Common myeloid progenitor, CD34-positive (primary cell): ENCODE measurements at regions of chr11 and their contacts with region 1.

Region 1: GRCh38 chr11:72091005-72091691 is 10.5 kb downstream of the LRRC51 start:
- DNase-seq: peak; percentile 86 to 93 (median 91)
- H3K4me3 ChIP-seq: peak overlapping the region in 1 of 7 experiments; percentile 14
- H3K27ac ChIP-seq: peak overlapping the region in 1 of 2 experiments; percentile 30
- H3K4me1 ChIP-seq: peaks cover 0 to 18% (median 13%) of the 10 kb centered on the region in 4 experiments
- H3K27me3 ChIP-seq: no peaks in the 10 kb centered on the region

Region 2: DNA sequence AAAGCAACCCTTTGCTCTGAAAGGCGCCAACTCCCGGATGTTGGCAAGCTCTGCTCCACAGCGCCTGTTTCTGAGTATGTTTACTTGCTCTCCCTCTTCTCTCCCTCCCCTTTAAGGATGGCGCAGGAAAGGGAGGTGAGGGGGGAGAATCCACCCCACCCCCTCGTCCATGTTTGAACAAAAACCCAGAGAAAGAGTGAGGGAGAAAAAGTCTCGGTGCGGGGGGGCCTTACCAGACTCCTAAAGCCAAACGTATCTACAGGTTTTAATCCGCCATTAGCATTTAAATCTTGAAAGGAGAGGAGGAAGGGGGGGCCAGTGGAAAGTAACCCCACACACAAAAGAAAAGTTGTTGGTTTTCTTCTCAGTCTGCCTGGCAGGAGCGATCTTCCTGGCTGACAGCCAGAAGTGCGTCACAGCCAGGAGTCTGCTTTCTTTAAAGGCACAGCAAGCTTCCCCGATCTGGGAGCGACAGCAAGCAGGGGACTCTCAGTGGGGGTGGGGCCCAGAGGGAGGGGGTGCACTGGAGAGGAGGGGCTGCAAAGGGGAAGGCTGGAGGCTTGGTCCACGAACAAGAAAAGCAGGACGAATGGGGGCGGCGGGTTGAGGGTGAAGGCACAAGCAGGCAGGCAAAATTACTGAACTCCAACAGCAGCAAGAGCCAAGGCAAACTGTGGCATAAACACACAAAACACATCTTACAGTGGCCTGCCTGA is 50.3 kb before region 1 on chr11:
- CTCF ChIA-PET with region 1: interaction called, 394 read pairs
- POLR2A ChIA-PET with region 1: no interaction called
- DNase-seq: peak; percentile 90 to 94 (median 94)
- H3K4me3 ChIP-seq: peak overlapping the region; percentile 67 to 93 (median 82)
- H3K27ac ChIP-seq: peak overlapping the region; percentile 91 to 95
- H3K4me1 ChIP-seq: peaks cover 19 to 65% (median 50%) of the 10 kb centered on the region in 4 experiments
- H3K27me3 ChIP-seq: no peaks in the 10 kb centered on the region

Region 3: DNA sequence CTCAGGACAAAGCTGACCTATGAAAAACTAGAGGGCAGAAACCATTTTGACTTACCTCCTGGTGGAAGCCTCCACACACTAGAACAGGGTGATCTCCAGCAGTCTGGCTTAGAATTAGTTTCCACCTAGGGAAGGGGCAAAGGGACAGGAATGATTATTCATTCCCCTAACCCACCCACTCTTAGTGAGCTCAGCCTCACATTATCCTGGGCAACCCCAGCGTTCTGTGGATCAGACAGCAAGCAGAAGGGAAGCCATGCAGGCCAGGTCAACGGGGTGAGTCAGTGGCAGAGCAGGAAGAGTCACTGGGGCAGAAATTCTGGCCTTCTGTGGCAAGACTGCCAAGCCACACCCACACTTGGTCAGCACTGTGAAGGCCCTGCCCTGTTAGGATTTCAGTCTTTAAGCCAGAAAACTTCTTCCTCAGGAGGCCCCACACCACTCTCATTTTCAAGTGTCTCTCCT is 21.3 kb before region 1 on chr11:
- CTCF ChIA-PET with region 1: interaction called, 28 read pairs
- POLR2A ChIA-PET with region 1: interaction called, 4 read pairs
- DNase-seq: peak in 2 of 3 donors; percentile 23 to 24
- H3K4me3 ChIP-seq: peak overlapping the region in 1 of 7 experiments; percentile 32
- H3K27ac ChIP-seq: peak overlapping the region in 1 of 2 experiments; percentile 51
- H3K4me1 ChIP-seq: peaks cover 0 to 35% (median 9%) of the 10 kb centered on the region in 4 experiments
- H3K27me3 ChIP-seq: no peaks in the 10 kb centered on the region

Region 4: DNA sequence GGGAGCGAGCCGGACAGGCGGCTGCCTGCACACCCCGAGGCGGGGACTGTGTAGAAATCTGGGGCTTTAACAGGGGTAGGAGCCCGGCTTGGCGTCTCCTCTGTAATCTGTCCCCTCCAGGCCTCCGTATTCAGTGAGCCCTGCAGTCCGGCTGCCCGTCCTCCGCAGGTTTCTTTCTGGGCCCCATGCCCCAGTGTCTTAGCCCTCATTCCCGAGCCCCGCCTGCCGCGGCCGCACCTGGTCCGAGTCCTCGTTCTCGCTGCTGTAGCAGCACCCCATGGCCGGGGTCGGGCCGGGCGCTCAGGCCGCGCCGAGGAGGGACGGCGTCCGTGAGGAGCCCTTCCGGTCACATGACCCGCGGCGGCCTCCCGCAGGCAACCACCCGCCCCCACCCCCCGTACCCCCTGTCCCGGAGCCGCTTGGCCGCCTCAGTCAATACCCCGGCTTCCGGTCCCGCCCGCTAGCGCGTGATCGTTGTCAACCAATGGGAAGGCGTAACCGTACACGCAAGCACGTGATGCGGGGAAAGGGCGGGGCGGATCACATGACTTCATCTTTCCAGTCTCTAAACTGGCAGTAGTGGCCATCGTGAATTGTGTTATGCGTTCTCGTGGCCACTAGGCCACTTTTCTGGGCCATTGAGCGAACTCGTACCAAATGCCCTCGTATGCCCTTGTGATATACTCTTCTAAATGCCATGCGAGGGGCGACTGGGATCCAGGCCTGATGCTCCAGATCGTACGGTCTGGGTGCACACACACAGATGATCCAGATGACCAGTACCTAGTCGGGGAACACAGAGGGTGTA is 12.0 kb after region 1 on chr11 and contains the start of gene LAMTOR1:
- CTCF ChIA-PET with region 1: interaction called, 86 read pairs
- POLR2A ChIA-PET with region 1: interaction called, 21 read pairs
- DNase-seq: peak; percentile 99 to 100 (median 100)
- H3K4me3 ChIP-seq: peak within 1 kb of the TSS; percentile 72 to 94 (median 87)
- H3K27ac ChIP-seq: peak within 1 kb of the TSS; percentile 95 to 96
- H3K4me1 ChIP-seq: peaks cover 36 to 54% (median 51%) of the 10 kb centered on the region in 4 experiments
- H3K27me3 ChIP-seq: no peaks in the 10 kb centered on the region

Region 5: GRCh38 chr11:72224564-72225410 is 133.6 kb after region 1 on chr11 and contains the start of gene INPPL1:
- CTCF ChIA-PET with region 1: no interaction called
- POLR2A ChIA-PET with region 1: no interaction called
- DNase-seq: peak in 2 of 3 donors; percentile 29 to 40
- H3K4me3 ChIP-seq: peak within 1 kb of the TSS; percentile 61 to 95 (median 86)
- H3K27ac ChIP-seq: peak within 1 kb of the TSS; percentile 61 to 85
- H3K4me1 ChIP-seq: peaks cover 8 to 45% (median 33%) of the 10 kb centered on the region in 4 experiments
- H3K27me3 ChIP-seq: no peaks in the 10 kb centered on the region